ENCODE measurements at regions of chr16 and their contacts with region 1.

Region 1: DNA sequence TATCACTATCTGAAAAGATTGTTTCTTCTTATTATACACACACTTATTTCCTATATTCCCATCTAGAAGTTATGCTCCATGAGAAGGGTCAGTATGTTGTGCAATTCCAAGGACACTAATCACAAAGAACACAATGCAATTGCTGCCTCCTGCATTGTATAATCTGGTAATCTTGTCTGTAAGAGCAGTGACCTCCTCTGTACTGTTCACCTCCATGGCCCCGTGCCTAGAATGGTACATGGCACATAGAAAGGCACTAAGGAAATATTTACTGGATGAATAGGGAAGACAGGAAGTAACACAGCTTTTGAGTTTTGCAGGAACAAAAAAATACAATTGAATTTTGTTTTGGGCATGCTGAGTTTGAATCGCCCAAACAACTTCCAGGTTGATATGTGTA is 214.6 kb upstream of the SALL1 start:
- DNase-seq: no peak
- H3K4me3 ChIP-seq: no peak overlapping the region
- CTCF ChIP-seq: no peak
- POLR2A ChIP-seq: no peak

Region 2: DNA sequence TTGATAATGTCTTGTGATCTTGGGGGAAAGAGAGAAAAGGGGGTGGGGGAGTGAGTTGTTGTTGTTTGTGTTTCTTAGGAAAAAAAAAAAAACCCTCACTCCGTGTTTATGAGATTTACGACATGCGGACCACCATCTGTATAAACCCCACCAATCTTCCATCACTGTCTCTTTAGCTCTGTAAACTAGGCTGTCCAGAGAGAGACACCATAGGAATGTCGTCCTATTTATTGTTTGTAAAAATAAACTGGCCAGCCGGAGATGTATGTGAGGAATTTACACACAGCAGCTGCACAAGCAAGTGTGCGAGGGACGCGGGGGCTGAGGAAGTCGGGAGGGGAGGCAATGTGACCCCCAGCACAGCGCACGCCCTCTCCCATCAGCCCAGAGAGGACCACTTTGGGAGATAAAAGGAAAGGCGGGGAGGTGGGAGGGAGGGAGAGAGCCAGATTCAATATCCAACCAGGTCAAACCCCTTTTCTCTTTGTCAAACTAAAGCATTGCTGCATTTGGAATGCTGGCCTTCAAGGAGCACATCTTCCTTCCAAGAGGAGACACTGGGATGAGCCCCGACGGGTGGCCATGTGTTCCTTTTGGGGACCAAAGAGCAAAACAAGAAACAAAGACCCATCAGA is 78.5 kb before region 1 on chr16:
- intact Hi-C with region 1: loop called (anchors 10 kb)
- DNase-seq: no peak
- H3K4me3 ChIP-seq: no peak overlapping the region
- CTCF ChIP-seq: no peak
- POLR2A ChIP-seq: no peak

Region 3: GRCh38 chr16:51337662-51338061 is 28.1 kb before region 1 on chr16:
- intact Hi-C with region 1: no loop called
- DNase-seq: no peak
- H3K4me3 ChIP-seq: no peak overlapping the region
- CTCF ChIP-seq: no peak
- POLR2A ChIP-seq: no peak

Region 4: DNA sequence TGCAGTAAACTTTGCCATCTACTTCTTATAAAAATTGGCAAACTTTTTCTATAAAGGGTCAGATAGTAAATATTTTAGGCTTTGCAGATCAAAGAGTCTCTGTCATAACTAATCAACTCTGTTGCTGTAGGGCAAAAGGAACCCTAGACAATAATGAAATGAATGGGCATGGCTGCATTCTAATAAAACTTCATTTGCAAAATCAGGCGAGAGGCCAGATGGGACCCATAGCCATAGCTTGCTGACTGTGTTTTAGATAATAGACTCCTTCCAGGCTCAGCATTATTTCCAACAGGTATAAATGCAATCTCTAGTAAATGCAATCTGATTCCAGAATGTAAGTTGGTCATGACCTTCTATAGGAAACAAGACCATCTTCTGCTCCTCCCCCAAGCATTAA is 690.5 kb after region 1 on chr16:
- intact Hi-C with region 1: no loop called
- DNase-seq: no peak
- H3K4me3 ChIP-seq: no peak overlapping the region
- CTCF ChIP-seq: no peak
- POLR2A ChIP-seq: no peak

Measured in lower leg skin (tissue), 4 donors.